WTC11 (cell line): ENCODE measurements at regions of chr13 and their contacts with region 1.

Region 1: DNA sequence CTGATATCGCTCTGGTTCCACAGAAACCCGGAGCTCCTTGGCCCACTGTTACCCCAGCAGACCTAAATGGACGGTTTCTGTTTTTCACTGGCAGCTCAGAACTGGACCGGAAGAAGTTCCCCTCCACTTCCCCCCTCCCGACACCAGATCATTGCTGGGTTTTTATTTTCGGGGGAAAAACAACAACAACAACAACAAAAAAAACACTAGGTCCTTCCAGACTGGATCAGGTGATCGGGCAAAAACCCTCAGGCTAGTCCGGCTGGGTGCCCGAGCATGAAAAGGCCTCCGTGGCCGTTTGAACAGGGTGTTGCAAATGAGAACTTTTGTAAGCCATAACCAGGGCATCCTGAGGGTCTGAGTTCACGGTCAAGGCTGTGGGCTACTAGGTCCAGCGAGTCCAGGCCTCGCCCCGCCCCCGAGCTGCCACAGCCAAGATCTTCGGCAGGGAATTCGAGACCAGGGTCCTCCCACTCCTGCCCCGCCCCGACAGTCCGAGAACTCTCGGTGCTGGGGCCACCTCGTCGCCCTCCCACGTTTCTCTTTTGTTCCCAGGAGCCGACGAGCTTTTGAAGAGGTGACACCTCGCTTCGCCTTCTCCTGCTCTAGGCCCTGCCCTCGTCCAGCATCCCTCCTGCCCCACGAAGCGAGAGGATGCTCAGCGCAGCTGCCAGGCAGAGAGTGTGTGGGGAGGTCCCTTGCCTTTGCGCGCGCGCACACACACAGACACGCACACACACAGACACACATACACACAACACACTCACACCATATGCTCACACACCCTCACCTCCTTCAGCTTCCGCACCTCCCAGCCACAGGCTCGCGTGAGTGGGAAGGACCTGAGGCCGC is 8.8 kb downstream of the ZIC2 start:
- DNase-seq: peak; percentile 66
- ATAC-seq: peak; percentile 1
- H3K4me3 Mint-ChIP-seq: peak overlapping the region; percentile 71
- H3K27ac Mint-ChIP-seq: no peak overlapping the region; the same call in 1 of the 2 replicates
- H3K4me1 Mint-ChIP-seq: peaks cover 85% of the 10 kb centered on the region
- H3K27me3 Mint-ChIP-seq: peaks cover 74% of the 10 kb centered on the region
- CTCF ChIP-seq: no peak

Region 2: DNA sequence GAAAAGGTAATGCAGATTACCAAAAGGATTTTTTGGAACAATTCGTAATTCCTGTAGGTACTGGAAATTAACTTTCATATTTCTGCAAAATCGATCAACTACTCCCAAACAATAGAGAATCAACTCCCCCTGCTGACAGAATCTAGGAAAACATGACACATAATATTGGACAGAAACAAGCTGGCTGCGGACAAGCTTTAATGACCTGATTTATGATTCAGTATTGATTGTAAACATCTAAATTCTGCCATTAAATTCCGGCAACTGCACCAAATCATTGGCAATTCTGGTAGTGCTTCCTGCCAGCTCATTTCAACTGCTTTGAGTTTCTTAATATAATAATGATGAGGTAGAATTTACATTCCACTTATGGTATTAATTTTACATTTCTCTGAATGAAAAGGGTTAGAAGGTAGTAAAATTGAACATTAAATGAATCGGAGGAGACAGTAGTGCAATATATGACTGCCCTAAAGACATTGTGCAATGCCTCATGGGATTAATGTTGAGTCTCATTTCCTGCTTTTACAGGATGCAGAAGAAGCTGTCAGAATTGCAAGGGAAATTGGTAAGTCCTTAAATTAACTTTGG is 245.1 kb after region 1 on chr13:
- CTCF ChIA-PET with region 1: interaction called, 10 read pairs
- POLR2A ChIA-PET with region 1: no interaction called
- DNase-seq: no peak
- ATAC-seq: no peak
- H3K4me3 Mint-ChIP-seq: no peak overlapping the region
- H3K27ac Mint-ChIP-seq: no peak overlapping the region
- H3K4me1 Mint-ChIP-seq: peaks cover 47% of the 10 kb centered on the region
- H3K27me3 Mint-ChIP-seq: no peaks in the 10 kb centered on the region
- CTCF ChIP-seq: peak; percentile 38; the same call in 1 of the 2 replicates